Mammary epithelial cell (primary cell): ENCODE measurements at regions of chr4 and their contacts with region 1.

Region 1: DNA sequence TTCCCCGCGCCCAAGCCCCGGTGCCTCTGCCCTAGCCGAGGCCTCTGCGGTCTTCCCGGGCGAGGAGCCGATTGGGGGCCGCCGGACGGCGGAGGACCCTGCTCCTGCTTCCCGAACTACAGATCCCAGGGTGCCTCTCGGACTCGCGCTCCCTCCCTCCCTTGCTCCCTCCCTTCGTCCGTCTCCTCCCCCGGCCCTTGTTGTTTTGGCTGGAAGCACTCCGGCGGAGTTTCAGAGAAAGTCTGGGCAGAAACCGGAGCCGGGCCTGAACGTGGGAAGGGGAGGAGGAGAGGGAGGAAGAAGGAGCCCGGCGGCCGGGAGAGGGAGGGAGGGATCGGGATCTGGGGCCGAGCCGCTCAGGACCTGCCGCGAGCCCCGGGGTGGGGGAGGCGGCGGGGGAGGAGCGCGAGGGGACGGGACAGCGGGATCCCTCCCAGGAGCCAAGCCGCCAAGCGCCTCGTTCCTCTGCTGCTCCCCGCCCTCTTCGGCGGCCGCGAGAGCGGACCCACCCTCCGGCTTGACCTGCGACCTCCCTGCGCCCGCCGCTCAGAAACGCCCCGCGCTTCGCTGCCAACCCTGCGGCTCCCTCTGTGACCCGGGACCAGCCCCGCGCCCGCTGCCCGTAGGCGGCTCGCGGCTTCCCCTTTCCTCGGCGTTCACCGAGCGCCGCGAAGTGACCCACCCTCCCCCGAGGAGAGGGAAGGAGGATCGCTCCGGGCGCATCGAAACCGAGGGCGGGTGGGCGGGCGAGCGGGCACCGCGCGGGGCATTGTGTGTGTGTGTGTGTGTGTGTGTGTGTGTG is 496 bp upstream of the GAB1 start:
- DNase-seq: peak; percentile 91
- H3K4me3 ChIP-seq: peak overlapping the region; percentile 83 to 95 (median 91)
- H3K27ac ChIP-seq: peak overlapping the region; percentile 65
- H3K4me1 ChIP-seq: peaks cover 11% of the 10 kb centered on the region
- H3K27me3 ChIP-seq: no peaks in the 10 kb centered on the region
- CTCF ChIP-seq: no peak

Region 2: GRCh38 chr4:143085224-143085623 is 251.0 kb before region 1 on chr4:
- CTCF ChIA-PET with region 1: no interaction called
- dilution Hi-C with region 1: no loop called
- in situ Hi-C with region 1: no loop called
- intact Hi-C with region 1: no loop called
- DNase-seq: no peak
- H3K4me3 ChIP-seq: no peak overlapping the region
- H3K27ac ChIP-seq: no peak overlapping the region
- H3K4me1 ChIP-seq: no peaks in the 10 kb centered on the region
- H3K27me3 ChIP-seq: peaks cover 5% of the 10 kb centered on the region
- CTCF ChIP-seq: peak; percentile 10 to 17

Region 3: GRCh38 chr4:143207557-143207956 is 128.6 kb before region 1 on chr4:
- CTCF ChIA-PET with region 1: no interaction called
- dilution Hi-C with region 1: no loop called
- in situ Hi-C with region 1: loop called in 1 of 2 experiments (anchors 25 kb)
- intact Hi-C with region 1: loop called (anchors 2 kb)
- DNase-seq: peak; percentile 16
- H3K4me3 ChIP-seq: no peak overlapping the region
- H3K27ac ChIP-seq: no peak overlapping the region
- H3K4me1 ChIP-seq: no peaks in the 10 kb centered on the region
- H3K27me3 ChIP-seq: no peaks in the 10 kb centered on the region
- CTCF ChIP-seq: peak; percentile 21 to 52

Region 4: GRCh38 chr4:143346206-143346605 is 10.0 kb after region 1 on chr4:
- CTCF ChIA-PET with region 1: no interaction called
- dilution Hi-C with region 1: no loop called
- in situ Hi-C with region 1: no loop called
- intact Hi-C with region 1: loop called (anchors 1 kb)
- DNase-seq: peak; percentile 95
- H3K4me3 ChIP-seq: peak overlapping the region; percentile 3 to 35 (median 4)
- H3K27ac ChIP-seq: peak overlapping the region; percentile 87
- H3K4me1 ChIP-seq: peaks cover 35% of the 10 kb centered on the region
- H3K27me3 ChIP-seq: no peaks in the 10 kb centered on the region
- CTCF ChIP-seq: no peak

Region 5: GRCh38 chr4:143389579-143390195 is 53.5 kb after region 1 on chr4:
- CTCF ChIA-PET with region 1: interaction called, 12 read pairs
- dilution Hi-C with region 1: no loop called
- in situ Hi-C with region 1: no loop called
- intact Hi-C with region 1: loop called (anchors 5 kb)
- DNase-seq: peak; percentile 44
- H3K4me3 ChIP-seq: no peak overlapping the region
- H3K27ac ChIP-seq: no peak overlapping the region
- H3K4me1 ChIP-seq: peaks cover 19% of the 10 kb centered on the region
- H3K27me3 ChIP-seq: no peaks in the 10 kb centered on the region
- CTCF ChIP-seq: no peak

Region 6: DNA sequence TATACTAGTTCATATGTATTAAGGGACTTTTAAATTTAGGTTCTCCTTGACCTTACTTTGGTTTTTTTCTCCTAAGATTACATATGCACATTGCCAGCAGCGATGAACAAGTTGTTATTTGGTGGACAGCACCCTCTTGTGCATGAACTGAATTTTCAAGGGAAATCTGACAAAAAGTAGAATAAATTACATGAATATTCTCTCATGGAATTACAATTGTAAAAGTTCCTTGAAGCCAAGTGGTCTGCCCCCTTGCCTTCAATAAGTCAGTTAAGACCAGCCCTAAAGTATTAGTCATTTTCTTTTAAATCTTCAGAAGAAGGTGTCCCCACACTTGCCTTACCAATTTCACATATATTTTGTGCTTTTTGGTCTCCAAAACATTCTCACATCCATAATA is 146.7 kb after region 1 on chr4:
- CTCF ChIA-PET with region 1: no interaction called
- dilution Hi-C with region 1: no loop called
- in situ Hi-C with region 1: no loop called
- intact Hi-C with region 1: loop called (anchors 2 kb)
- DNase-seq: peak; percentile 18
- H3K4me3 ChIP-seq: no peak overlapping the region
- H3K27ac ChIP-seq: no peak overlapping the region
- H3K4me1 ChIP-seq: no peaks in the 10 kb centered on the region
- H3K27me3 ChIP-seq: no peaks in the 10 kb centered on the region
- CTCF ChIP-seq: peak; percentile 40 to 57

Region 7: DNA sequence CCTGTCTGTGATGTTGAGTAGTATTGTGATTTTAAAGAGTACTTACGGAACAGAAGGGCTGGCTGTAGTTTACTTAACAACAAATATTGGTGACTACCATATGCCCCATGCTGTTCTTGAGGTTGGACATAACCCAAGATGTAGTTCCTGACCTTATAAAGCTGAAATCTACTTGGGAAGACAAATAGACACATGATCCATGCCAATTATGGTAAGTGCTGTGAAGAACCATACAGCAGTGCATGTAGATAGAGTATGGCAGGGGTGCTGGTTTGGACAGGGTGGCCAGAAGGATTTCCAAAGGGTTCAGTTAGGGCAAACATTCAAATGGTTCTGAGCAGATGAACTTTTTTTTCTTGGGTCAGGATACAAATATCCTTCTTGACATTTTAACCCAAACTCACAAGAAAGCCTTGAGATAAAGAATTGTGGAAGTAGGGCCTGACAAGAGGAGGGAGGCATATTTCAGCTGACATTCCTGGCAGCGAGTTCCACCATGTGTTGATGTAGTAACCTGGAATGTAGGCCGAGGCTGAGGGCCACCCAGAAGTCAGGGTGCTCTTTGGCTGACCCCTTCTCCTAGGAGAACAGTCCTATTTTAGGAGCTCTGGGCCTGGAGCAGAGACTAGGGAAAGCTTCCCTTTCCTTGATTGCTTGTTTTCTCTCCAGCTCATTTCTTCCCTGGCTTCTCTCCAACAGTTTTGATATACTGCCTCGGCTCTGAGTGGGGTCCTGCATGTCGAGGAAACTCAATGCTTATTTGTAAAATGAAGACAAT is 290.1 kb after region 1 on chr4:
- CTCF ChIA-PET with region 1: no interaction called
- dilution Hi-C with region 1: no loop called
- in situ Hi-C with region 1: no loop called
- intact Hi-C with region 1: no loop called
- DNase-seq: no peak
- H3K4me3 ChIP-seq: no peak overlapping the region
- H3K27ac ChIP-seq: no peak overlapping the region
- H3K4me1 ChIP-seq: no peaks in the 10 kb centered on the region
- H3K27me3 ChIP-seq: peaks cover 5% of the 10 kb centered on the region
- CTCF ChIP-seq: no peak